Activated CD4-positive, alpha-beta T cell treated with anti-CD3 and anti-CD28 coated beads, Interleukin-2, amount 10 ng/mL, durations not matched to agents 24 days and 14 days (primary cell): ENCODE measurements at regions of chr1 and their contacts with region 1.

Region 1: DNA sequence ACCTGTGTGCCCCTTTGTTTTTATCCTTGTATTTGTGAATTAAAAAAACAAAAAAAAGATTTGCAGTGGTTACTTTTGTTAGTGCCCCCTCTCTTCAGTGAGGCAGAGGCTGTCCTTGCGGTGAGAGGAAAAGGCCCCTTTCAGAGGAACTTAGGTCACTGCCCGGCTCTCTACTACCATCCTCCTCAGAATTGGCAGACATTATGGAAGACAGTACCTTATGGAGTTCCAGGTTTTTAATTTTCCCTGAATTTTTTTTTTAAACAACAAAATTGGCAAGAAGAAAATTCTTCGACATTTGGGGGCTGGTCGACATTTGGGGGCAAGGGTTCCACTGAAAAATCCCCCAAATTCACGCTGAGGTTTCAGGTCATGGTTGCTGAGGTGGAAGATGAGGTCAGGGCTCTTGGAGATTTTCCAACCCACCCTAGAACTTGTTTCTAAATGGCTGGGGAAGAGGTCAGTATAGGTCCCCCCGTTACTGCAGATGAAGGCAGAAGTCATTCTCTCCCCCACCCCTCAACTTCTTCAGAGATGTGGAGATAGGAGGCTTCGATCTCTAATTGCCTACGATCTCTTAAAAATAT is 5.3 kb downstream of the RXFP4 start:
- DNase-seq: peak; percentile 55
- H3K4me3 Mint-ChIP-seq: peak overlapping the region; percentile 64
- H3K27ac Mint-ChIP-seq: peak overlapping the region; percentile 93
- H3K4me1 Mint-ChIP-seq: peaks cover 35% of the 10 kb centered on the region
- H3K27me3 Mint-ChIP-seq: no peaks in the 10 kb centered on the region

Region 2: DNA sequence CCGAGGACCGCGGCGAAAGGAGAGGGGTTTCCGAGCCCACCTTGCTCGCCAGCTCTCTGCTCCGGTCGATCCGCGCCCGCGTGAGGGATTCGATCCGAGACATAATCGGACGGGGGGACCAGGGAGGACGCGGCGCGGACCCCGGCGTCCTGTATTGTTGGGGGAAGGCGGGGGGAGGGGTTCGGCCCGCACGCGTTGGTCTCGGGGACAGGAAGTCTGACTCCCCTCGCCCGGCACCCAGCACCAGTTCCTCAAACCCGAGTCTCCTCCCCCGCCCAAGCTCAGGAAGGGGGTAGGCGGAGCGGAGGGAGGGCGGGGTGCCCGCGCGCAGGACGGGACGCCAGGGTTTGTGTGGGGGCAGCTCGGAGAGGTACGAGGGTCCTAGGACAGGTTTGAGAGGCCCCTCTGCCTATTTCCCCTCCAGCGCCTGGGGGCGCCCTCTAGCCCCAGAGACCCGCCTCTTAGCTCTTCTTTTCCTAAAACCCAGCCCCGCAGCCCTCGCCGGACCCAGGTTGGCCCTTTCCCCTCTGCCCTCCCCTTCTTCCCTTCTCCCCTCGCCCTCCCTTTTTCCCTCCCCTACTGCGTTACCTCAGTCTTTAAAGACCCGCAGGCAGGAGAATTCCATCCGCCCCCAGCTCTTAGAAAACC is 31.7 kb after region 1 on chr1 and contains the start of gene ARHGEF2:
- intact Hi-C with region 1: loop called (anchors 1 kb)
- DNase-seq: peak; percentile 94
- H3K4me3 Mint-ChIP-seq: peak within 1 kb of the TSS; percentile 99
- H3K27ac Mint-ChIP-seq: peak within 1 kb of the TSS; percentile 92
- H3K4me1 Mint-ChIP-seq: peaks cover 70% of the 10 kb centered on the region
- H3K27me3 Mint-ChIP-seq: no peaks in the 10 kb centered on the region
- total RNA-seq, gene ARHGEF2: 189 and 198 TPM in 2 replicates